Cardiac septum (tissue), 1 donor: ENCODE measurements at regions of chr6 and their contacts with region 1.

Region 1: GRCh38 chr6:37691904-37692806 is 5.5 kb downstream of the MDGA1 start:
- DNase-seq: peak; percentile 88

Region 2: DNA sequence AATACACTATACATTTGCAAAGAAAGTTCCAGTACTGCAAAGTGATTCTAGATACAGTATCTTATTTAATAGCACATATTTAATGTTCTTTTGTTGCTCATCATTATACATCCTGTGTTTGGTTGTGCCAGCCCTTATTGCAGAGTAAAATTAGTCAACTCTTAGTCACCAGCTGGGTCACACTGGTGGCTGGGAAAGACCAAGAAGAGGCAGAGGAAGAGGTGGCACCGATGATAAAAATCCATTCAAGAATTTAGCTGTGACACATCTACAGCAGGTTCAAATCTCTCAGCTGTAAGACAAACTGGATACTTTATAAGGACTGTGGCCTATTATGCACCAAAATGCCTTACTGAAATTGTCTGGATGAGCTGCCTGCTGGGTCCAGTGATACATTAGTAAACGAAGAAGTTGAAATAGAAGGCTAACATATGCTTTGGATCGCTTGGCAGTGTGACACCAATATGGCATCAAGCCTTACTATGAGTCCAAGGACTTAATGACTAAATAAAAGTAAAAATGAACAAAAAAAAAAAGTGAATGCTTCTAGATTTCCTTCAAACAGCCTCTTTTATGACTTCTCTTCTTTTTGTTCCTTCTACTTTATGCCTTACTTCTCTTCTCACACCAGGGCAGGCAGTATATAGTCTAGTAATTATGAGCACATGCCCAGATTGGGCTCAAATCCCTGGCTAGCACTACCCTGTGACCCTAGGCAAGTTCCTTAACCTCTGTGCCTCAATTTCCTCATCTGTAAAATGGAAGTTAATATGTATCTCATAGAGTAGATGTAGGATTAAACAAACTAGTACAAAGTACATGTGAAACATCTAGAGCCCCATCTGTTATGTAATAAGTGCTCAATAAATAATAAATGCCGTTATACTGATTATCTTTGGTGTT is 367.8 kb before region 1 on chr6:
- intact Hi-C with region 1: loop called (anchors 2 kb)
- DNase-seq: no peak

Region 3: DNA sequence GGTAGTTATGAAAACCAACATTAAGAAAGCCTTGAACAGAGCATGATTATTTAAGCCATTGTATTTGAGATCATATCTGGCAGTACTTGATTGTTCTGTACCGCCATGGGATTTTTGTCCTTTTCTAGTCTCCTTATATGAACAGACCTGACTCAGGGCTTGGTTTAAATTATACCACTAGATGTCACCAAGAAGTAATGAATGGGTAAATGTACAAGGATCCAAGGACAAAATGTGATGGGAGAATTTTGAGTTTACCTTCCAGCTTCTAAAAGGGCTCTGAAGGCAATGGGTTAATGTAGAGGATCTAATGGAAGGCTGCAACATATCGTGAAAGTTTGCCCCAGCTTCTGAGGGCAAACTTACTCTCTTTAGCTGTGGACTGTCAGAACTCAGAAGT is 326.4 kb before region 1 on chr6:
- intact Hi-C with region 1: loop called (anchors 10 kb)
- DNase-seq: no peak

Region 4: GRCh38 chr6:37483917-37484785 is 208.0 kb before region 1 on chr6:
- intact Hi-C with region 1: loop called (anchors 5 kb)
- DNase-seq: no peak